ENCODE measurements at regions of chr14 and their contacts with region 1.

Region 1: DNA sequence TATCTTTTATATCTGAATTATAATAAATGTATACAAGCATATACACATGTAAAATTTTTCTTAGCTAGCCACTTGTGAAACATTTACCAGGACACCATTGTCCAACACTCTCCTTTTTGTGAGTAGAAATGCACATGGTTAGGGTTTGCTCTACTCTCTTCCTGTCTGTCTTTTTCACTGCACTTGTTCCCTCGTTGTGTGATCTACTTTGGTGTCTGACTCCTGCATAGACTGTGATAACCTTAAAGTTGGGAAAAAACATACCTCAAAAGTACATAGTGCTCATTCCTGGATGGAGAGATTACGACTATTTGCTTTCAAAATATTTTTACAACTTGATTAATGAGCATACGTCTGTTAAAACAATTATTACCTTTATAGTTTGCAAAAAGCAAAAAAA is 294.1 kb upstream of the FLRT2 start:
- DNase-seq: peak in 1 of 2 experiments; percentile 12
- H3K4me3 ChIP-seq: no peak overlapping the region
- H3K4me3 Mint-ChIP-seq: no peak overlapping the region
- H3K27ac Mint-ChIP-seq: no peak overlapping the region
- H3K4me1 ChIP-seq: peaks cover 8% of the 10 kb centered on the region; the same call in 1 of the 2 replicates
- H3K4me1 Mint-ChIP-seq: peaks cover 25% of the 10 kb centered on the region
- H3K27me3 ChIP-seq: no peaks in the 10 kb centered on the region
- H3K27me3 Mint-ChIP-seq: no peaks in the 10 kb centered on the region
- CTCF ChIP-seq: no peak

Region 2: DNA sequence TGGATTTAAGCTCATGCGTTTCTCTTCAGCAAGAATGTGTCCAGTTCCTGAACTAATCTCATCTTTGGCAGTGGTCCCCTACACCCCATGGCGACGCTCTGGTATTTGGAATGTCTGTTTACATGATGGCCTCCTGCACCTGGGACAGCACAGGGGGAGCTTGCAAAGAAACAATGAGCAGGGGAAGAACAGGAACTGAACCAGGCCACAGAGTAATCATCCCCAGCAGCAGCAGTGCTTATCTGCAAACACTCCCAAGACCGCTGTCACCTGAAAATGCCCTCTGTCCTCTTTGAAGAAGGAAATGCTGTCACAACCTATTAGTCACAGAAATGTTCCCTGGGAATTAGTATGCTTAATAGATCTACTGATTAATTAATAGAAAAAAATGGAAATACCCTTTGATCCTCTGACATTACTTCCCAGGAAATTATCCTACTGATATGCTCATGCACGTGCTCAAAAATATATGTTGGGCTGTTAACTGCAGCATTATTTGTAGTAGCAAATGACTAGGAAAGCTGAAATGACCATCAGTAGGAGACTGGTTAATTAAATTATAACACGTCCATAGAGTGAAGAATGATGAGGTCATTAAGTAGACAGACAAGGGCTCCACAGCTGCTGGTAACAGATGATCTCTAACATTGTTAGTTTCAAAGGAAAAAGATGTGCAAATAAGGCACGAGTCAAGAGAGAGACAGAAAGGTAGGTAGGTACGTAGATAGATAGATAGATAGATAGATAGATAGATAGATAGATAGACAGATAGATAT is 14.7 kb after region 1 on chr14:
- CTCF ChIA-PET with region 1: no interaction called
- POLR2A ChIA-PET with region 1: no interaction called
- intact Hi-C with region 1: loop called (anchors 2 kb)
- DNase-seq: peak; percentile 39 to 70
- H3K4me3 ChIP-seq: no peak overlapping the region
- H3K4me3 Mint-ChIP-seq: no peak overlapping the region
- H3K27ac Mint-ChIP-seq: peak overlapping the region; percentile 8
- H3K4me1 ChIP-seq: peaks cover 8% of the 10 kb centered on the region; the same call in 1 of the 2 replicates
- H3K4me1 Mint-ChIP-seq: peaks cover 21% of the 10 kb centered on the region
- H3K27me3 ChIP-seq: no peaks in the 10 kb centered on the region
- H3K27me3 Mint-ChIP-seq: no peaks in the 10 kb centered on the region
- CTCF ChIP-seq: no peak

Measured in Caco-2 (cell line).